ENCODE measurements at regions of chr7 and their contacts with region 1.

Region 1: DNA sequence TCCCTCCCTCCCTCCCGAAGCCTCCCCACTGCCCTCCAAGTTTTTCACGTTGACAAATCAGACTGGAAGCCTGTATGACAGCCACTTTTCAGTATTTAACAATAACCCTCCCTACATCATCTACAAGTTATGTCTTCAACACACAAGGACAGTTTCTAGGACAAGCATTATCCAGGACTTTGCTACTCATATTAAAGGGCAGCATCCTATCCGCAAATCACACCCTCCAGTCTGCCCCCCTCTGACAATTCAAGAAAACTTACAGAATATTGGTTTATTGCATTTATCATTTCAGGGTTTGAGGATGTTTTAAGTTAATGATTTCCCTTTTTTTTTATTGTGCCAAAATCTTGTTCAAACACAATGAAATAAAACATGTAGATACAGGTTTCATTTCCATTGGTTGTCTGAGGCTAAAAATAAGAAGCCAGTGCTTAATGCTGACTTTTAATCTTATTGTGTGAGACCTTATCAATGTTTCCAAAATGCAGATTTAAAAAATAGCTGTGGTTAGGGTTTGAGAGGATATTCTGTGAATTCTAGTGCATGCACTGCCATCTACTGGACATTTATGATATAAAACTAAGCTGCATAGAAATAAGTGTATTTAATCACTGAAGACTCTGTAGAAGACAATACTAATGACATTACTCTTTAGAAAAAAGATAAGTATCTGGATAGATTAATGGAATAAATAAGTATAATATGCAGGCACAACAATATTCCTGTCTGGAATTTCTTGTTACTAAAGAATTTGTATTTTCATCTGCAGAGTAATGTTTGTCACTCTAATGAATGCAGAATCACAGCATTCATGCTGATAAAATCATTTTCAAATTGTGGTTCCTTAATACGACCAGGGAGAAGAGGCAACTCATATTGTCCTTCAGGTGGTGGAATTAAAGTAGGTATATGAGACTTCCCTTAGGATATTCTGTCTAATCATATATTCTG is 64.1 kb downstream of the CAV1 start:
- H3K4me3 ChIP-seq: no peak overlapping the region
- H3K27ac ChIP-seq: no peak overlapping the region
- H3K4me1 ChIP-seq: peaks cover 10% of the 10 kb centered on the region
- CTCF ChIP-seq: peak; percentile 30; the same call in 1 of the 2 replicates

Region 2: DNA sequence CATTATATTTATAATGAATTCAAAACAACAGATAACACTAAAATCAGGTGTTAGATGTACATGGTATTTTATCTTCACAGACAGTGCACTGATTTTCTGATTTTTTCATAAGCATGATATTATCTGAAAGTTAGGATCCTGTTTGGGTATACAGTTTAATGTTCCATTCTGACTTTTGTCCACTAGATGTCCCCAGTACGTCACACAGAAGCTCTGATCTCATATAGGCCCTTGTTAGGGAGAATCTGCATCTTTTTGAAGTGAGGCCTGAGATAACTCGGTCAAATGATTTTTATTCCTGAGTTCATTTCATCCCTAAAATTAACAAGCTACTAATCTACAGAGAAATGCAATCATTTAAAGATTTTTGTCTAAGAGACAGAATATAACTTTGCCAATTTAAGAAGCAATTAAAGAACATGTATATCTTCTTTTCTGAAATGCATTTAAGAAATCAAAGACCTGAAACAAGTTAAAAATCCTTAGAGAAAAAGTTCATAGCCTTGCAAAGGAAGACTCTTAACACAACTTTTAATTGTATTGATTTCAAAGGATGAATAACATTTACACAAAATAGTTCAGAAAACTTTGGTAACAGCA is 450.6 kb before region 1 on chr7:
- CTCF ChIA-PET with region 1: interaction called, 12 read pairs
- POLR2A ChIA-PET with region 1: no interaction called
- H3K4me3 ChIP-seq: no peak overlapping the region
- H3K27ac ChIP-seq: no peak overlapping the region
- H3K4me1 ChIP-seq: no peaks in the 10 kb centered on the region; the same call in none of the 2 replicates
- CTCF ChIP-seq: peak; percentile 54; the same call in 1 of the 2 replicates

Region 3: DNA sequence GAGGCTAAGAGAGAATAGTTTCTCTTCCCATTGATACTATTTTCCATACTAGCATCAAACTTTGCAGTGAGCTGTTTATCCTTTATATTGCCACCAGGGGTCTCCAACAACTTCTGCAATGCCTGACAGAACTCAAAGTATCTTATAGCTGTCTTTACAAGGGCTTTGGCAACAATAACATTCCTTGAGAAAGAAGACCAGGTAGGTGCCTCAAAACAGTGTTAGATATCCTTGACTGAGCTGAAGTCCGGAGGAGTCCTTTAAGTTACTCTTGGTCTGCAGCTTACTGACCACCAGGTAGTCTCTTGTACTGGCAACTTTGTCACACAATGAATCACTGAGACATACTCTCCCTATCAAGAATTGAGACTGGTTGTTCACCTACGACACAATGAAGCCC is 408.6 kb before region 1 on chr7:
- CTCF ChIA-PET with region 1: interaction called, 31 read pairs
- POLR2A ChIA-PET with region 1: interaction called, 3 read pairs
- H3K4me3 ChIP-seq: no peak overlapping the region
- H3K27ac ChIP-seq: no peak overlapping the region
- H3K4me1 ChIP-seq: no peaks in the 10 kb centered on the region
- CTCF ChIP-seq: peak; percentile 38; the same call in 1 of the 2 replicates

Region 4: GRCh38 chr7:116525913-116526861 is 62.7 kb before region 1 on chr7:
- CTCF ChIA-PET with region 1: interaction called, 19 read pairs
- POLR2A ChIA-PET with region 1: interaction called, 3 read pairs
- H3K4me3 ChIP-seq: peak overlapping the region; percentile 59
- H3K27ac ChIP-seq: peak overlapping the region; percentile 93; the same call in 1 of the 2 replicates
- H3K4me1 ChIP-seq: 0 out of 2 replicates have a peak, but pooled peaks cover 4% of the 10 kb centered on the region
- CTCF ChIP-seq: peak; percentile 72

Region 5: GRCh38 chr7:116607299-116607698 is 18.4 kb after region 1 on chr7:
- CTCF ChIA-PET with region 1: interaction called, 22 read pairs
- POLR2A ChIA-PET with region 1: no interaction called
- H3K4me3 ChIP-seq: no peak overlapping the region
- H3K27ac ChIP-seq: no peak overlapping the region
- H3K4me1 ChIP-seq: no peaks in the 10 kb centered on the region
- CTCF ChIP-seq: no peak

Region 6: DNA sequence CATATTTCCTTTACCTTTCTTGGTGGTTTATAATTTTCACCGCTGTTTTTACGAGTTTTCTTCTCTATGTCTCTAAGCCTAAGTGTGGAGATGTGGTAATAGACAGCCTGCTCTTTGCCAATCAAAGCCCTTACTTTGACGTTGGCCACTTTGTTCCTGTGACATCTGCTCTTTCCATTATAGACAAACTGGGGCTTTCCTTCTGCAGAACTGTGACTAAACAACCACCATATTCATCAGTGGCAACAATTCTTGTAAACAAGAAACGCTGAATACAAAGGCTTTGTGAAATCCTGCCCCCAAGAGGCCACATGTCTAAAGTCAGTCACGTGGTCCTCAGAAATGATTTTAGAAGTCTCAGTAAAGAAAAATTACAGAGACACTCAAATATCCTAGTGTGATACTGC is 213.8 kb after region 1 on chr7:
- CTCF ChIA-PET with region 1: interaction called, 55 read pairs
- POLR2A ChIA-PET with region 1: no interaction called
- H3K4me3 ChIP-seq: no peak overlapping the region
- H3K27ac ChIP-seq: no peak overlapping the region
- H3K4me1 ChIP-seq: peaks cover 15% of the 10 kb centered on the region
- CTCF ChIP-seq: peak; percentile 29; the same call in 1 of the 2 replicates

Measured in HEK293 (cell line).